ENCODE measurements at regions of chr6 and their contacts with region 1.

Region 1: GRCh38 chr6:37207903-37208456 is 38.0 kb downstream of the PIM1 start:
- DNase-seq: peak; percentile 83
- H3K4me3 ChIP-seq: no peak overlapping the region
- H3K27ac ChIP-seq: no peak overlapping the region
- H3K4me1 ChIP-seq: peaks cover 3% of the 10 kb centered on the region
- H3K27me3 ChIP-seq: peaks cover 20 to 25% of the 10 kb centered on the region in 2 experiments
- CTCF ChIP-seq: peak; percentile 72 to 84
- POLR2A ChIP-seq: no peak

Region 2: DNA sequence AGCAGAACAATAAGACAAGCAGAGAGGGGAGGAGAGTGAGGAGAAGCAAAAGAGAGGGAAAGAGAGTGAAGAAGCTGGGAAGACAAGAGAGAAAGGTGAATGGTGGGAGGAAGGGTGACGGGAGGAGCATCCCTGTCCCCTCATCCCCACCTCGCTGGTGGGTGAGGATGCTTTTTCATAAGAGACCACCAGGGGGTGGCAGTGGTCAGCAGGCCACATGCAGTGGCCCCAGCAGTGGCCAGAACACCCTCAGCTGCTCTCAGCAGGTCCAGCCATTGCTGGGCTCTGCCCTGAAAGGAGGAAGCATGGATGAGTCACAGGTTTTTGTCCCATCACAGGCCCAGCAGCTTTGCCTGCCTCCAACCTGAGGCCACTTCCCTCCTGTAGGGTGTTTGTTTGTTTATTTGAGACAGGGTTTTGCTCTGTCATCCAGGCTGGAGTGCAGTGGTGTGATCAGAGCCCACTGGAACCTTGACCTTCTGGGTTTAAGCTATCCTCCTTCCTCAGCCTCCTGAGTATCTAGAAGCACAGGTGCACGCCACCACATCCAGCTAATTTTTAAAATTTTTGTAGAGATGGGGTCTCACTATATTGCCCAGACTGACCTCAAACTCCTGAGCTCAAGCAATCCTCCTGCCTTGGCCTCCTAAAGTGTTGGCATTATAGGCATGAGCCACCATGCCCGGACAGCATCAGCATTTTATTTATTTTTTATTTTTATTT is 178.6 kb before region 1 on chr6:
- CTCF ChIA-PET with region 1: interaction called, 330 read pairs
- POLR2A ChIA-PET with region 1: interaction called, 3 read pairs
- dilution Hi-C with region 1: no loop called
- intact Hi-C with region 1: loop called (anchors 1 kb)
- DNase-seq: peak; percentile 77
- H3K4me3 ChIP-seq: no peak overlapping the region
- H3K27ac ChIP-seq: no peak overlapping the region
- H3K4me1 ChIP-seq: no peaks in the 10 kb centered on the region
- H3K27me3 ChIP-seq: peaks cover 0 to 3% of the 10 kb centered on the region in 2 experiments
- CTCF ChIP-seq: peak; percentile 70 to 79
- POLR2A ChIP-seq: no peak

Region 3: DNA sequence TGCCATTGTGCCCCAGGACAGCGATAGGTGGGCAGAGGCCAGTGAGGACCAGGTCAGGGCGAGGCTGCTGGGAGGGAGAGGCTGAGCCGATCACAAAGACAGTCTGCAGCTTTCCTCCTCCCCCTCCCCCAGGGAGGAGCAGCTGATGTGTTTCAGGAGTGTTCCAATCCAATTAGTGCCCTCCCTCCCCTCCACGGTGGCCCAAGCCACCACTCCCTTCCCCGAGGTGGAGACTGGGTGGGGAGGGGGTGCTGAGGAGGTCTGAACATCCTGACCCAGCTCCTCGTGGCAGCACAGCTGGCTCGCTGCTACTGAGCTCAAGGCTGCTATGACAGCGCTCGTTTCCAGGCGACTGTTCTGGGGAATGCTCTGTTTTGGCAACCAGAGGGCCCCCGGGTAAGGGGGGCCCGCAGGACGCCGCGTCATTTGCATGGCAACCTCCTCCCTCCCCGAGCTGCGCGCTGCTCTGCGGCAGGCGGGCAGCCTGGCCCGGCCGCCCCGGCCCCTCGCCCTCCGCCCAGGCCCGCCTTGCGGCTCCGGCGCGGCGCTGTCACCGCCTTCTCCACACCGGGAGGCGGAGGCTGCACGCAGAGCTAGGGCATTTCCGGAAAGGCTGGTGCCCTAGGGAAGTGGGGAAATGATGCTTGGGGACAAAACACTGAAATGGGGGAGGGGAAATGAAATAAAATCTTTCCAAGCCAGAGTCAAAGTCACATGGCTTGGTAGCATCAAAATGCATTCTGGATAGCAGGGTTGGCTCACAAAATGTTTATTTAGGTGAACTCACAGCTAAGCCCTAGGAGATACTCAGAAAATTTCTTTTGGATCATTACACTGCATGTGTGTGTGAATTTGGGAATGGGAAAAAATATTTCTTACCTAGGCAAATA is 105.5 kb before region 1 on chr6:
- CTCF ChIA-PET with region 1: no interaction called
- POLR2A ChIA-PET with region 1: no interaction called
- dilution Hi-C with region 1: no loop called
- intact Hi-C with region 1: no loop called
- DNase-seq: peak; percentile 83
- H3K4me3 ChIP-seq: peak overlapping the region; percentile 15 to 63 (median 22)
- H3K27ac ChIP-seq: peak overlapping the region; percentile 72
- H3K4me1 ChIP-seq: peaks cover 18% of the 10 kb centered on the region
- H3K27me3 ChIP-seq: no peaks in the 10 kb centered on the region
- CTCF ChIP-seq: no peak
- POLR2A ChIP-seq: peak; percentile 33

Region 4: GRCh38 chr6:37177077-37177934 is 30.7 kb before region 1 on chr6:
- CTCF ChIA-PET with region 1: interaction called, 32 read pairs
- POLR2A ChIA-PET with region 1: no interaction called
- dilution Hi-C with region 1: no loop called
- intact Hi-C with region 1: loop called (anchors 1 kb)
- DNase-seq: no peak
- H3K4me3 ChIP-seq: no peak overlapping the region
- H3K27ac ChIP-seq: no peak overlapping the region
- H3K4me1 ChIP-seq: no peaks in the 10 kb centered on the region
- H3K27me3 ChIP-seq: no peaks in the 10 kb centered on the region
- CTCF ChIP-seq: no peak
- POLR2A ChIP-seq: no peak

Region 5: DNA sequence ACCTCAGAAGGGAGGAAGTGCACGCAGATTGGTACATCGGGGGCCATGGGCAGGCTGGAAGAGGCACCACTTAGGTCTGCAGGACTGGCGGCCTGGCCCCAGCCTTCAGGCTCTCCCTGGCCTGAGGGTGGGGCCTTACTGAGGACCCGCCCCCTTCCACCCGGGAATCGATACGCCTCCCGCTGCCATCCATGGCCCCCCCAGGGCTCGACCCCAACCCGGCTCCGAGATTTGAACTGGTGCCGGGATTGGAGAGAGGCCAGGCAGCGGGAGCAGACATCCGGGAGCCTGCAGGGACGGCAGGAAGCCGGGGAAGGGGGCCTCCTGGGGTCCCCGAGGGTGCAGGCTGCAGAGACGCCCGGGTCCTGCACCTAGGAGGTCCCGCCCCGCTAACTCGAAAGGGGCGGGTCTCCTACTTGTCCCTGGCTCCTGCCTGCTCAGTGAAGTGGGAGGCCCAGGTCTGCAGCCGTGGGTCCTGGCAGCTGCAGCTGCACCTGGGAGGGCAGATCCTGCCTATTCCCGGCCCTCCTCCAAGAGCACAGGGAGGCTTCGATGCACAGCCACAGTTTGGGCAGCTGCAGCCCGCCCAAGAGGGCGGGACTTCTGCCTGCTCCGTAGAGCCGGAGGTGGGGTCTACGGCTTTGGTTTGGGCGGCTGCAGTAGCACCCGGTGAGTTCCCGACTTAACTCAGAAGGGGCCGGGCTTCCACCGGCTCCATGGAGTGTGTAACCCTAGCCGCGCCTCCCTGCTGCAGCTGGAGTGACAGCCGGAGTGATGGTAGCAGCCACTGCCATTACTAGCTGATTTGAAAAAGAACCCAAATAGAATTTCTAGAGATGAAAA is 14.4 kb after region 1 on chr6:
- CTCF ChIA-PET with region 1: interaction called, 10 read pairs
- POLR2A ChIA-PET with region 1: no interaction called
- dilution Hi-C with region 1: no loop called
- intact Hi-C with region 1: no loop called
- DNase-seq: peak; percentile 86
- H3K4me3 ChIP-seq: peak overlapping the region; percentile 8 to 43 (median 31)
- H3K27ac ChIP-seq: no peak overlapping the region
- H3K4me1 ChIP-seq: peaks cover 7% of the 10 kb centered on the region
- H3K27me3 ChIP-seq: no peaks in the 10 kb centered on the region
- CTCF ChIP-seq: no peak
- POLR2A ChIP-seq: no peak

Region 6: GRCh38 chr6:37396476-37397180 is 188.6 kb after region 1 on chr6:
- CTCF ChIA-PET with region 1: no interaction called
- POLR2A ChIA-PET with region 1: no interaction called
- dilution Hi-C with region 1: no loop called
- intact Hi-C with region 1: no loop called
- DNase-seq: no peak
- H3K4me3 ChIP-seq: no peak overlapping the region
- H3K27ac ChIP-seq: no peak overlapping the region
- H3K4me1 ChIP-seq: no peaks in the 10 kb centered on the region
- H3K27me3 ChIP-seq: no peaks in the 10 kb centered on the region
- CTCF ChIP-seq: no peak
- POLR2A ChIP-seq: no peak